Calu3 (cell line): ENCODE measurements at regions of chr15 and their contacts with region 1.

Region 1: GRCh38 chr15:75578948-75579920 is at the start of gene PTPN9:
- DNase-seq: peak; percentile 82
- H3K4me3 Mint-ChIP-seq: peak within 1 kb of the TSS; percentile 86
- H3K27ac Mint-ChIP-seq: peak within 1 kb of the TSS; percentile 75
- H3K4me1 Mint-ChIP-seq: peaks cover under 1% of the 10 kb centered on the region
- H3K27me3 Mint-ChIP-seq: no peaks in the 10 kb centered on the region
- CTCF ChIP-seq: peak; percentile 69
- total RNA-seq, gene PTPN9: 30.8 and 31.1 TPM in 2 replicates

Region 2: DNA sequence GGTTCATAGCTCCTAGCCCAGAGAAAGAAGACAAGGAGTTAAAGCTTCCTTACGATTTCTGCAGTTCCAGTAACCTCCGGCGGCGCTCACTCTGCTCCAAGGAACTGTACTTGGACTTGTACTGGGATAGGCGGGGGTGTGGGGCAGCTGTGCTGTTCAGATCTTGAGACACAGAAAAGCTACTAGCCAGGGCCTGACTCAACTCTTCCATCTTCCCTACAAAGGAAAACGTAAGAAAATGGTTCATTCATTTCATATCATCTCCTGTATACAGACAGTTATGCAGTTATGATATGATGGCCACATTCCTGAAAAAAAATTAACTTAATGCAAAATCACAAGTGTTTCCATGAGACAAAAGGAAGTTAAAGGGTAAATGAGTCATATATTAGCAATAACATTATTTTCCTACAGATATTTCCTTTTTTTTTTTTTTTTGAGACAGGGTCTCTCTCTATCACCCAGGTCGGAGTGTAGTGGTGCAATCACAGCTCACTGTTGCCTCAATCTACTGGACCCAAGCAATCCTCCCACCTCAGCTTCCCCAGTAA is 41.7 kb after region 1 on chr15:
- CTCF ChIA-PET with region 1: interaction called, 3 read pairs
- intact Hi-C with region 1: loop called (anchors 5 kb)
- DNase-seq: peak; percentile 34
- H3K4me3 Mint-ChIP-seq: peak overlapping the region; percentile 5
- H3K27ac Mint-ChIP-seq: peak overlapping the region; percentile 49
- H3K4me1 Mint-ChIP-seq: peaks cover 16% of the 10 kb centered on the region
- H3K27me3 Mint-ChIP-seq: no peaks in the 10 kb centered on the region
- CTCF ChIP-seq: no peak

Region 3: DNA sequence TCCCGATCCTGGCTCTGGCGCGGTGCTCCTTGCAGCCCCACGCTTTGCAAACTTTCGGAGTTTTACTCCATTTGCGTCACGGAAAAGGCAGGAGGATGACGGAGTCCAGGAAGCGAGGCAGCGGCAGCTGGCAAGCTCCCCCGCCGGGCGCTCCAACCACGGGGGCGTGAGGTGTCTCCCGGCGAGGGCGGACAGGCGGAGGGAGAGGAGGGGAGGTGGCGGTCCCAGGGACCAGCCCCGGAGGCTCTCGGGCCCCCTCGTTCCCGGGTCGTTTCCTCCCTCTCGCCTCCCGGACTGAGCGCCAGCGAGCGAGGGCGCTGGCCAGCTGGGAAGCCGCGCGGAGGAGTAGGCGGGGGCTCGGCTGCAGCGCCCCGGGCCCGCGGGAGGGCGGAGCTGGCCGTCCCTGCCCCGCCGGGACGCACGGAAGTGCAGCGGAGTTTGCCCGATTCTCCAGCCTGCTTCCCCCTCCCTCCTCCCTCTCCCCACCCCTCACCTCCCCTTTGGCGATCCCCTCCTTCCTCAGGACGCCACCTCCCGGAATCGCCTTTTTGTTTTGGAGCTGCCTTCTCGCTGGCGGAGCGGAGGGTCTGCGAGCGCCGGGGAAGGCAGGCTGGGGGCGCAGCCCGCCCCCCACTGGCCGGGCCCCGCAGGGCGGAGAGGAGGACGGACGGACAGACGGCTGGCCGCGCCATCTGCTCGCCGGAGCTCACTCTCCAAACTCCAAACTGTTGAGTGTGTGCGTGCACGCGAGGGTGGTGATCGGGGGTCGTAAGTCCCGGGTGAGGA is 68.3 kb after region 1 on chr15 and contains the start of gene SNX33:
- CTCF ChIA-PET with region 1: interaction called, 13 read pairs
- intact Hi-C with region 1: no loop called
- DNase-seq: peak; percentile 85
- H3K4me3 Mint-ChIP-seq: peak within 1 kb of the TSS; percentile 82
- H3K27ac Mint-ChIP-seq: peak within 1 kb of the TSS; percentile 49
- H3K4me1 Mint-ChIP-seq: peaks cover 58% of the 10 kb centered on the region
- H3K27me3 Mint-ChIP-seq: no peaks in the 10 kb centered on the region
- CTCF ChIP-seq: peak; percentile 55
- total RNA-seq, gene SNX33: 23.2 and 24.1 TPM in 2 replicates

Region 4: DNA sequence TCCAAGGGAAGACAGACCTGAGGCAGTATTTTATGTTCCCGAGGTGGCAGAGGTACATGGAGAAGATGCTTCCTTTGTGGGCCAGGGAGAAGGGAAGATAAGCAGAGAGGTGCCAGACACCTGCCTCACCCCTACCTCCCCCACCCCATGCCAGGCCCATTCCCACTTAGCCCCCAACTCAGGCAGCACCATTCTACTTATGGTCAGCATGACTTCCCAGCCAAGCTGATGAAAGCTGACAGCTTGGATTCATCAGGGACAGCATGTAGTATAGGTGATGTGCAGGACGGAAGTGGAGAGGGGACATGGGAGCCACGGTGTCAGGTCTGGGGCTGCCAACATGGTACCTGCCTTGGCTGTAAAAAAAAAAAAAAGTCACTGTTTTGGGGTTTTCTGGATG is 190.9 kb after region 1 on chr15:
- CTCF ChIA-PET with region 1: no interaction called
- intact Hi-C with region 1: no loop called
- DNase-seq: no peak
- H3K4me3 Mint-ChIP-seq: no peak overlapping the region
- H3K27ac Mint-ChIP-seq: no peak overlapping the region
- H3K4me1 Mint-ChIP-seq: peaks cover 8% of the 10 kb centered on the region
- H3K27me3 Mint-ChIP-seq: no peaks in the 10 kb centered on the region
- CTCF ChIP-seq: no peak